Aorta (tissue), 5 donors: ENCODE measurements at regions of chr21 and their contacts with region 1.

Region 1: DNA sequence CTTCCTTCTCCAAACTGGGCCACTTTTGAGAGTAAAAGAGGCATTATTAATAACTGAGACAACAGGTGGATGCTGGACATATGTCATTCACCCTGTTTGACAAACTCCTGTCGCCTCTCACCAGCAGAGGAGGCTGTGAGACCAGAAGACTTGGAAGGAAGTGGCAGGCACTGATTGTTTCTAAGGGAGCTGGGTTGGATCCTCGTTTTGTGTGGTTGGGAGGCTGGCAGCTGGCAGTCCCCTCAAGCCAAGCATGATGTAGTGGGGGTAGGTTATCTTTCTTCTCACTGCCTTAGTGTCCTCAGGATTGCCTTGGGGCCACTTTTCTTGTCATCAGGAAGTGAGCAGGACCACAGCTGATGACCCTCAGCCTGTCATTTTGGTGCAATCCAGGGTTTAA is 86.5 kb upstream of the KCNJ15 start:
- DNase-seq: peak in 1 of 2 donors; percentile 67
- ATAC-seq: peak; percentile 66
- H3K4me3 ChIP-seq: no peak overlapping the region
- H3K27ac ChIP-seq: no peak overlapping the region
- H3K4me1 ChIP-seq: peaks cover 0 to 8% of the 10 kb centered on the region in 2 donors
- H3K27me3 ChIP-seq: no peaks in the 10 kb centered on the region

Region 2: GRCh38 chr21:38082936-38083485 is 87.3 kb before region 1 on chr21:
- intact Hi-C with region 1: no loop called
- DNase-seq: no peak
- ATAC-seq: no peak
- H3K4me3 ChIP-seq: no peak overlapping the region
- H3K27ac ChIP-seq: no peak overlapping the region
- H3K4me1 ChIP-seq: peaks cover 0 to 2% of the 10 kb centered on the region in 2 donors
- H3K27me3 ChIP-seq: no peaks in the 10 kb centered on the region

Region 3: GRCh38 chr21:38219049-38219628 is 48.9 kb after region 1 on chr21:
- intact Hi-C with region 1: loop called in 1 of 2 experiments (anchors 5 kb)
- DNase-seq: peak; percentile 81 to 83
- ATAC-seq: peak; percentile 89
- H3K4me3 ChIP-seq: no peak overlapping the region
- H3K27ac ChIP-seq: peak overlapping the region; percentile 51 to 71
- H3K4me1 ChIP-seq: peaks cover 0 to 2% of the 10 kb centered on the region in 2 donors
- H3K27me3 ChIP-seq: no peaks in the 10 kb centered on the region

Region 4: GRCh38 chr21:38389896-38390295 is 219.6 kb after region 1 on chr21:
- intact Hi-C with region 1: no loop called
- DNase-seq: no peak
- ATAC-seq: no peak
- H3K4me3 ChIP-seq: no peak overlapping the region
- H3K27ac ChIP-seq: no peak overlapping the region
- H3K4me1 ChIP-seq: peaks cover 0 to 2% of the 10 kb centered on the region in 2 donors
- H3K27me3 ChIP-seq: no peaks in the 10 kb centered on the region